Activated naive CD4-positive, alpha-beta T cell treated with anti-CD3 and anti-CD28 coated beads, Interleukin-2, amount 10 ng/mL, durations not matched to agents 7 days and 5 days (primary cell): ENCODE measurements at regions of chr3 and their contacts with region 1.

Region 1: DNA sequence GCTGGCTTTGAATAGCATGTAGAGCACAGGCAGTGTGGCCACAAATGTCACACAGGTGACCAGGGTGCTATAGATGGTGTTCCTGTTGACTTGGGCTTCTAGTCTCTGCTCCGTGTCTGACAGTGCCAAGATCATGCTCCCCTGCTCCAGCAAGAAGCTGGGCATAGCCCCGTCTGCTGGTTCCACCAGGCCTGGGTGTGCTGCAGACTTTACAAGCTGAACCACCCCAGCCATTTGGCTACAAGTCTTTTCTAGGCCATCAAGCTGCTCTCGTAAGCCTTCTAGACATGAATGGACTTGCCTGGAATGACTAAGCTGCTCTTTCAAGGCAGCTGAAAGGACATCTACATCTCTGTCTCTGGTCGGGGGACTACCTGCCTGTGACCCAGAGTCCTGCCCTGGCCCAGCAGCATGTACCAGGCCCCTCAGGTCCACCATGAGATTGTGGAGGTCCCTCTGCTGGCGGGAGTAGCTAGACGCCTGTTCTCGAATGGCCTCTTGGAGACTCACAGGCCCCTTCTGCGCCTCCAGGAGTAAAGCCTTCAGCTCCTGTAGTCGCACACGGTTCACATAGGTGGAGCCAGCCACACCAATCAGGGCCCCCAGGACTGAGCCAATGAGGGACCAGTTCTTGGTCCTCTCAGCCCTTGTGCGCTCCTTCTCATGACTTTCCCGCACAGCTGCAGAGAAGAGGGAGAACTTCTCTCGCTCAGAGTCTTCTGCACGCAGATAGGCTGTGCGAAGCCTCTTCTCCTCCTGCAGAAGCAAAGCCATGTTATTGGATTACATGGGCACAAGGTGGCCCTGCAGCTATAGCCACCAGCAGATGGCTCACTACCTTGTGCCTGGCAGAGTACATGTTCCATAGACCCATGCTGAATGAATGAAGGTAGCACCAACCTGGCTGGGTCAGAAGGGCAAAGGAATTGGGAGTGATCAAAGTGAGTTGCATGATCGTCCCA is 2.8 kb upstream of the PLXNB1 start:
- DNase-seq: peak; percentile 33
- H3K4me3 Mint-ChIP-seq: no peak overlapping the region
- H3K27ac Mint-ChIP-seq: no peak overlapping the region
- H3K4me1 Mint-ChIP-seq: peaks cover 27% of the 10 kb centered on the region
- H3K27me3 Mint-ChIP-seq: peaks cover 25% of the 10 kb centered on the region

Region 2: DNA sequence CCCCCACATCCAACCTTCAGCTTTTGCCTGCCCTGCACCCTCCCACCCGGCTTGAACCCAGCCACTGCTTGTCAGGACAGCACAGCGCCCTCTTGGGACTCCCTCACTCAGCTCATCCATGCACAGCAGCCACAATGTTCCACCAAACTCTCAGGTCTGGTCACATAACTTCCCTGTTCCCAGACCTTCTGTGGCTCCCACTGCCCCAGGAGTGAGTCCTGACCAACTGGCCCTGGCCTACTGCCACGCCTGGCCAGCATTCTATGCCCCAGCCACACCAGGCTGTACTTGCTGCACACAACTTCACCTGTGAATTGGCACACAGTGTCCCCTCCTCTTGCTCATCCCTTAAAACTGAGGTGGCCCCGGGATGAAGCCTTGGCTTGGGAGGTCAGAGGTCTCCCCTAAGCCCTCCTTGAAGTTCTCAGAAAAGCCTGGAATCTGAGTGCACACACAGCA is 23.8 kb before region 1 on chr3:
- CTCF ChIA-PET with region 1: interaction called, 170 read pairs
- DNase-seq: peak; percentile 20
- H3K4me3 Mint-ChIP-seq: no peak overlapping the region
- H3K27ac Mint-ChIP-seq: no peak overlapping the region
- H3K4me1 Mint-ChIP-seq: no peaks in the 10 kb centered on the region
- H3K27me3 Mint-ChIP-seq: peaks cover 9% of the 10 kb centered on the region

Region 3: GRCh38 chr3:48628277-48629017 is 195.8 kb after region 1 on chr3:
- CTCF ChIA-PET with region 1: no interaction called
- DNase-seq: no peak
- H3K4me3 Mint-ChIP-seq: no peak overlapping the region
- H3K27ac Mint-ChIP-seq: no peak overlapping the region
- H3K4me1 Mint-ChIP-seq: peaks cover 17% of the 10 kb centered on the region
- H3K27me3 Mint-ChIP-seq: no peaks in the 10 kb centered on the region